Body of pancreas (tissue), 4 donors: ENCODE measurements at regions of chr1 and their contacts with region 1.

Region 1: GRCh38 chr1:179586107-179586823 is 5.4 kb upstream of the TDRD5 start:
- DNase-seq: peak; percentile 75 to 90 (median 80)
- ATAC-seq: peak; percentile 91
- H3K4me3 ChIP-seq: no peak overlapping the region
- H3K27ac ChIP-seq: peak overlapping the region; percentile 58 to 88 (median 86)
- H3K4me1 ChIP-seq: peaks cover 16% of the 10 kb centered on the region
- H3K27me3 ChIP-seq: no peaks in the 10 kb centered on the region
- CTCF ChIP-seq: peak; percentile 59 to 82 (median 71)
- POLR2A ChIP-seq: peak; percentile 30 to 69 (median 63)

Region 2: GRCh38 chr1:179251675-179252074 is 334.6 kb before region 1 on chr1:
- intact Hi-C with region 1: loop called (anchors 10 kb)
- DNase-seq: peak in 2 of 4 donors; percentile 14 to 38
- ATAC-seq: peak; percentile 84
- H3K4me3 ChIP-seq: no peak overlapping the region
- H3K27ac ChIP-seq: no peak overlapping the region
- H3K4me1 ChIP-seq: no peaks in the 10 kb centered on the region
- H3K27me3 ChIP-seq: no peaks in the 10 kb centered on the region
- CTCF ChIP-seq: peak; percentile 44 to 88 (median 83)
- POLR2A ChIP-seq: no peak

Region 3: GRCh38 chr1:179327679-179328078 is 258.6 kb before region 1 on chr1:
- intact Hi-C with region 1: no loop called
- DNase-seq: peak in 1 of 4 donors; percentile 11
- ATAC-seq: no peak
- H3K4me3 ChIP-seq: no peak overlapping the region
- H3K27ac ChIP-seq: no peak overlapping the region
- H3K4me1 ChIP-seq: peaks cover 15% of the 10 kb centered on the region
- H3K27me3 ChIP-seq: no peaks in the 10 kb centered on the region
- CTCF ChIP-seq: no peak
- POLR2A ChIP-seq: no peak

Region 4: DNA sequence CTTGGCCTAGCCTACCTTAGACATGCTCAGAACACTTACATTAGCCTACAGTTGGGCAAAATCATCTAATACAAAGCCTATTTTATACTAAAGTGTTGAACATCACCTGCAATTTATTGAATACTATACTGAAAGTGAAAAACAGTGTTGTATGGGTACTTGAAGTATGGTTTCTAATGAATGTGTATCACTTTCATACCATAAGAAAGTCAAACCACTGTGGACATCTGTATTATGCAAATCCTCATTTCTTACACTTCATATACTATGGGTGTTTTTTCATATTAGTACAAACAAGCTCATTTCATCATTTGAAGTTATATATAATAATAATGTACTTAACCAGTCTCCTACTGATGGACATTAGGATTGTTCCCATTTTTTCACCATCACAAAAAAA is 46.6 kb after region 1 on chr1:
- intact Hi-C with region 1: no loop called
- DNase-seq: no peak
- ATAC-seq: no peak
- H3K4me3 ChIP-seq: no peak overlapping the region
- H3K27ac ChIP-seq: no peak overlapping the region
- H3K4me1 ChIP-seq: no peaks in the 10 kb centered on the region
- H3K27me3 ChIP-seq: no peaks in the 10 kb centered on the region
- CTCF ChIP-seq: no peak
- POLR2A ChIP-seq: no peak

Region 5: DNA sequence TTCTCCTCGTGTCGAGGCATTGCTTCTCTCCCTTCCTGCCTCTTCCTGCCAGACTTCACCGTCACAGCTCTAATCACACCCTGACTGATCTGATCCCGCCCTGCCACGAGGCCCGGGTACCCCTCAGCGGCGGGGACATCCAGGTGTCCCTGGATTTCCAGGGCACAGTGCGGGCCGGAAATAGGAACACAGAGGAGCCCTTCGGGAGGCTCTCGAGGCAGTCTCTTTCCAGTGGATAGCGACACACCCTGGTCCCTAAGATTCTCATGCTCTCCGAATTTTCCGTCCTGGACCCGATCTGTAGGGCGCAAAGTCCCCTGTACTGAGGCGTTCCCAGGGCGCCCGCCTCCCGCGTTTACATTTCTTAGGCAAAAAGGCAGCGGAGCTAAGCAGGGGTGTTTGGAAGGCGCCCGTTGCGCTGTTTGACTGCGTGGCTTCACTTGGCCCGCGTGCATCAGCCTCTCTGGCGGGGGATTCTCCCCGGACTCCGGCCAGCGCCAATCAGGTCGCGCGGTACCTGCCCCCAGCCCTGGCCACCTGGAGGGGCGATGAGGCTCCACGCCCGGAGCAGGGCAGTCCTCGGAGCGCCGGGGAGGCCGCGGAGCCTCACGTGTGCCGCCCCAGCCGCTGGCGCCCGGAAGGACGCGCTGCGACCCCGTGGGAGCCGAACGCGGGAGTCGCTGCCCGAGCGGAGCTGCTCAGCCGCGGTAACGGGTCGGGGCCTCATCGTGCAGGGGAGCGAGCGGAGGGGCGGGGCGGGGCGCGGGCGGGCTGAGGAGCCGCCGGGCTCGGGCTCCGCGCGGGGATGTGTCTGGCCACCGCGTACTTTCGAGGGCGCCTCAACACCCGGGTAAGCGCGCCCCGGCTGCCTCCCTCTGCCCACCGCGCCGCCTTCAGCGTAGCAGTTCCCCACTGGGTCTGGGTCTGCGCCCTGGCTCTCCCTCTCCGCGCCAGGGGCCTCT is 156.7 kb after region 1 on chr1 and contains the start of gene FAM163A:
- intact Hi-C with region 1: no loop called
- DNase-seq: peak in 1 of 4 donors; percentile 6
- ATAC-seq: peak; percentile 12
- H3K4me3 ChIP-seq: peak within 1 kb of the TSS in 1 of 2 donors; percentile 12
- H3K27ac ChIP-seq: no peak within 1 kb of the TSS
- H3K4me1 ChIP-seq: peaks cover 21% of the 10 kb centered on the region
- H3K27me3 ChIP-seq: peaks cover 0 to 23% of the 10 kb centered on the region in 2 donors
- CTCF ChIP-seq: no peak
- POLR2A ChIP-seq: no peak
- total RNA-seq, gene FAM163A: 0.26 TPM in 1 of 2 donors, not detected in the other

Region 6: GRCh38 chr1:180043785-180044184 is 457.5 kb after region 1 on chr1:
- intact Hi-C with region 1: no loop called
- DNase-seq: no peak
- ATAC-seq: no peak
- H3K4me3 ChIP-seq: no peak overlapping the region
- H3K27ac ChIP-seq: no peak overlapping the region
- H3K4me1 ChIP-seq: no peaks in the 10 kb centered on the region
- H3K27me3 ChIP-seq: no peaks in the 10 kb centered on the region
- CTCF ChIP-seq: no peak
- POLR2A ChIP-seq: no peak